Endothelial cell of umbilical vein (primary cell): ENCODE measurements at regions of chr18 and their contacts with region 1.

Region 1: GRCh38 chr18:60549338-60549960 is 176.9 kb upstream of the MC4R start:
- DNase-seq: peak; percentile 64
- H3K4me3 ChIP-seq: no peak overlapping the region
- H3K27ac ChIP-seq: no peak overlapping the region
- H3K4me1 ChIP-seq: no peaks in the 10 kb centered on the region
- H3K27me3 ChIP-seq: no peaks in the 10 kb centered on the region
- CTCF ChIP-seq: peak; percentile 53 to 57
- POLR2A ChIP-seq: no peak

Region 2: DNA sequence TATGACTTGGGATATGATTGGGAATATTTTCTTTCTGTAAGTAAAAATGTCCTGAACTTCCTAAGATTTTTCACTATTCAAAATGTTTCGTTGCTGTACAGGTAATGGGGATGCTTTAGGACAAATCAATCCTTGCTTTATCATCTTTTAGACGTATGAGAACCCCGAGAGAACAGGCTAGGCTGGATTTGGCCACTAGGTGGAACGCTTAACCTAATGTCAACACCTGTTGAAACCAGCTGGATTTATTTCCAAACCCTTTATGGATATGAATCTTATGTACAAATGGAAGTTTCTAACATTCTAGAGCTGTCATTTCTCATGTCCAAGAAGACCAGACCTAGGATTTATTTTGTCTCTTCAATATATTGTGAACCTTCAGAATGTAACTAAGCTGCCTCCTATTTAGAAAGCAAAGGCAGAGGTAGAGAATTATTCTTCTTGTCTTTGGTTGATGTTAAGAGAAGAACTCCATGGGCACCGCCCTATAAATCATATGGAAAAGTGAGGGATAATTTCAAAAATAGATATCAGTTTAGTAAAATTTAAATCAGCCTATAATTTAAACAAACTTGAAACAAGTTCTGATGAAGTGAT is 553.0 kb before region 1 on chr18:
- CTCF ChIA-PET with region 1: interaction called, 92 read pairs
- POLR2A ChIA-PET with region 1: no interaction called
- dilution Hi-C with region 1: no loop called
- intact Hi-C with region 1: no loop called
- DNase-seq: peak; percentile 10
- H3K4me3 ChIP-seq: no peak overlapping the region
- H3K27ac ChIP-seq: no peak overlapping the region
- H3K4me1 ChIP-seq: no peaks in the 10 kb centered on the region
- H3K27me3 ChIP-seq: no peaks in the 10 kb centered on the region
- CTCF ChIP-seq: peak; percentile 20 to 47
- POLR2A ChIP-seq: no peak

Region 3: GRCh38 chr18:60277855-60278480 is 271.5 kb before region 1 on chr18:
- CTCF ChIA-PET with region 1: no interaction called
- POLR2A ChIA-PET with region 1: no interaction called
- dilution Hi-C with region 1: no loop called
- intact Hi-C with region 1: no loop called
- DNase-seq: no peak
- H3K4me3 ChIP-seq: no peak overlapping the region
- H3K27ac ChIP-seq: no peak overlapping the region
- H3K4me1 ChIP-seq: no peaks in the 10 kb centered on the region
- H3K27me3 ChIP-seq: no peaks in the 10 kb centered on the region
- CTCF ChIP-seq: no peak
- POLR2A ChIP-seq: no peak

Region 4: GRCh38 chr18:60537074-60537473 is 12.4 kb before region 1 on chr18:
- CTCF ChIA-PET with region 1: interaction called, 13 read pairs
- POLR2A ChIA-PET with region 1: no interaction called
- dilution Hi-C with region 1: no loop called
- intact Hi-C with region 1: no loop called
- DNase-seq: no peak
- H3K4me3 ChIP-seq: no peak overlapping the region
- H3K27ac ChIP-seq: no peak overlapping the region
- H3K4me1 ChIP-seq: no peaks in the 10 kb centered on the region
- H3K27me3 ChIP-seq: no peaks in the 10 kb centered on the region
- CTCF ChIP-seq: no peak
- POLR2A ChIP-seq: no peak

Region 5: DNA sequence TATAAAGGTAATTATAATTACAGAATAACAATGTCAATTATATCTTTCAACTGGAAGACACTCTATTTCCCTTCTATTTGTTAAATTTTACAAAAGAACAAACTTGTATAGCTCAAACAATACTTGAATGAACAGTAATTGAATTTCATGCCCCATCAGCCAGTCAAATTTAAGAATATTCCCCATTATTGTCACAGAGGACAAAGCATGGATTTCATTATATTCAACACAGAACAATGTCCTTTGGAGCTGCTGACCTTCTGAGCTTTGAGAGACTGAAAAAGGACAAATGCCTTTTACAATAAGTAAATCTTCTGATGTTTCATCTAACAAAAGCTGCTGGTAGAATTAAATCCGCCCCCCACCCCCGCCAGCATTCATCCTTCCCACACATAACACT is 10.6 kb after region 1 on chr18:
- CTCF ChIA-PET with region 1: interaction called, 25 read pairs
- POLR2A ChIA-PET with region 1: no interaction called
- dilution Hi-C with region 1: no loop called
- intact Hi-C with region 1: no loop called
- DNase-seq: no peak
- H3K4me3 ChIP-seq: no peak overlapping the region
- H3K27ac ChIP-seq: no peak overlapping the region
- H3K4me1 ChIP-seq: no peaks in the 10 kb centered on the region
- H3K27me3 ChIP-seq: no peaks in the 10 kb centered on the region
- CTCF ChIP-seq: no peak
- POLR2A ChIP-seq: no peak